PC-9 (cell line): ENCODE measurements at regions of chr7 and their contacts with region 1.

Region 1: GRCh38 chr7:17298207-17298839 is at the start of gene AHR:
- DNase-seq: peak; percentile 85 to 87
- H3K4me3 ChIP-seq: peak within 1 kb of the TSS; percentile 83
- H3K27ac ChIP-seq: peak within 1 kb of the TSS; percentile 68
- H3K4me1 ChIP-seq: peaks cover 36% of the 10 kb centered on the region
- H3K27me3 ChIP-seq: no peaks in the 10 kb centered on the region
- CTCF ChIP-seq: no peak
- total RNA-seq, gene AHR: 46.4 and 61.3 TPM in 2 replicates

Region 2: GRCh38 chr7:15863951-15864625 is 1434.2 kb before region 1 on chr7:
- CTCF ChIA-PET with region 1: no interaction called
- POLR2A ChIA-PET with region 1: no interaction called
- intact Hi-C with region 1: no loop called
- DNase-seq: no peak
- H3K4me3 ChIP-seq: no peak overlapping the region
- H3K27ac ChIP-seq: no peak overlapping the region
- H3K4me1 ChIP-seq: no peaks in the 10 kb centered on the region
- H3K27me3 ChIP-seq: no peaks in the 10 kb centered on the region
- CTCF ChIP-seq: no peak

Region 3: DNA sequence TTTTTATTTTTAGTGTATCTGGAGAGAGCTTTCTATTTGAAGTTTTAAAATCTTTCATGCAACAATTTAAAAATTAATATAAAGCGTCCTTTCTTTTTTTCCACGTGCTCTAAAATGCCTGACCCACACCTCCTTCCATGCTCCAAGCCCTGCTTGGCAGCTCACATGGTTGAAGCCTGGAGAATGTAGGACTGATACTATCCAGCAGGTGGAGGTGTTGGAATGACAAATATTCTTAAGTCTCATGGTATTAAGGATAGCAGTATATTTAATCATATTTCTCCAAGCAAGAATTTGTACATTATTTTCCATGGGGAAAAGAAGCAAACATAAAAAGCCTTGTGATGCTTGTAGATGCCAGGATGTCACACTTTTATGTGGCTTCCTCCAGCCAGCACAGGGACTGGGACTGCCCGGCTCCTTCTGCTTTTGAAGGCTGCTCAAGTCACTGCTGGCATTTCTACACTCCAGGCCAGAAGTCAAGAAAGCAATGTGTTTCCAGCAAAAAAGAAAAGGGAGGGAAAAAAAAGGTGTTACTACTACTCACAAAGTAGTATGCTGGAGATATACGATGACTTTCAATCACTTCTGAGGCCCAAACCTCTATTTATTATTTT is 602.6 kb before region 1 on chr7:
- CTCF ChIA-PET with region 1: interaction called, 3 read pairs
- POLR2A ChIA-PET with region 1: no interaction called
- intact Hi-C with region 1: loop called (anchors 10 kb)
- DNase-seq: peak; percentile 37 to 63
- H3K4me3 ChIP-seq: no peak overlapping the region
- H3K27ac ChIP-seq: no peak overlapping the region
- H3K4me1 ChIP-seq: no peaks in the 10 kb centered on the region
- H3K27me3 ChIP-seq: no peaks in the 10 kb centered on the region
- CTCF ChIP-seq: peak; percentile 89

Region 4: DNA sequence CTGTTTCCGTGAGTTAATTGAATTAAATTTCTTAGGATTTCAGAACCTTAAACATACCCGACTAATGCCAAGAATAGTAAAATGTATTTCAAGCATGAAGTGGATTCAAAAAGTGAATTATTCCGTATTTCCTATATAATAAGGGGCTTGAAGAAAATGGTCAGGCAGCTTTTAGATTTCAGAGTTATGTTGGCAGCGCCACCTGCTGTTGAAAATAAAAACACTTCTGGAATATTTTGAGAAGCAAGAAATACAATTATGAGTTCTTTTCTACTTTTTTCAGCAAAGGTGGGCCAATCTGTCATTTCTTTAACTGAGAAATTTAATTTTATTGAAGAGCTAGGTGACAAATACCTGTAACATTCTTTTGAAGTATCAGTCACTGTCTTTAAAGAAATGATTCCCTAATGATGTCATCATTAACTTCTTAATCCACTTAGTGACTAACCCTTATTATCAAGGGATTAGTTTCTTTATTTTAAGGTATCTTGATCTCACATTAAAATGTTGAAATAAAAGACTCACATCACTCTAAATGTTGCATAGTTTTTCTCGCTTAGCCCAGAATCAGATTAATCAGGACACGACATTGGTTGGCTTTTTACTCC is 379.9 kb before region 1 on chr7:
- CTCF ChIA-PET with region 1: no interaction called
- POLR2A ChIA-PET with region 1: no interaction called
- intact Hi-C with region 1: loop called (anchors 5 kb)
- DNase-seq: peak in 1 of 2 experiments; percentile 45
- H3K4me3 ChIP-seq: no peak overlapping the region
- H3K27ac ChIP-seq: no peak overlapping the region
- H3K4me1 ChIP-seq: peaks cover 86% of the 10 kb centered on the region
- H3K27me3 ChIP-seq: no peaks in the 10 kb centered on the region
- CTCF ChIP-seq: peak; percentile 96

Region 5: DNA sequence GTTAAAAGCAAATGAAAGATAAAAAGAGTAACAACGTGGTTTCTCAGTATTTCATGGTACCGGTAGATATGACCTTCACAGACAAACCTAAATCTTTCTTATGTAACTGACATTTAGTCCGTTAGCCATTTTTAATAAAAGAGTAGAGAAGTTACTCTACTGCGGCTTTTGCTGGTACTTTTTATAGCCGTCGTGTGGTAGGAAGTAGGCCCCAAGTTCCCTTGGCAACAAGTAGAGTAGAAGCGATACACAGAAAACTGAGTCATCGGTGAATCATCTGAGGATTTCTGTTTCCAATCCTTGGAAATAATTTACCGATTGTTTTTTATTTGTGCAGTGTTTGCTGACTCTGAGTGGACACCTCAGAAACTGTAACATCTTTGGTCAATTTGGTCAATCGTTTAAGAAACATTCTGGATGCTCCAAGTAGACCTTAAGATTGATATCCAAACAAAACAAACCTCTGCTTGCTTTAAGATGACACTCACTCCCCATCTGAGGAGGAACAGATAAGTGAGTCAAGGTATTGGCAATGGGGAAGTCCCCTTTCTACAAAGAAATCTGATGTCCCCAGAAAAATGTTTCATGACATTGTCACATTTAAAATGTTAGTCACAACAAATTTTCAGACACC is 63.8 kb before region 1 on chr7:
- CTCF ChIA-PET with region 1: no interaction called
- POLR2A ChIA-PET with region 1: no interaction called
- intact Hi-C with region 1: loop called (anchors 2 kb)
- DNase-seq: peak; percentile 56 to 97
- H3K4me3 ChIP-seq: peak overlapping the region; percentile 21; the same call in 1 of the 2 replicates
- H3K27ac ChIP-seq: peak overlapping the region; percentile 67
- H3K4me1 ChIP-seq: peaks cover 32% of the 10 kb centered on the region
- H3K27me3 ChIP-seq: no peaks in the 10 kb centered on the region
- CTCF ChIP-seq: no peak

Region 6: GRCh38 chr7:17477182-17477581 is 178.9 kb after region 1 on chr7:
- CTCF ChIA-PET with region 1: no interaction called
- POLR2A ChIA-PET with region 1: interaction called, 25 read pairs
- intact Hi-C with region 1: no loop called
- DNase-seq: no peak
- H3K4me3 ChIP-seq: no peak overlapping the region
- H3K27ac ChIP-seq: no peak overlapping the region
- H3K4me1 ChIP-seq: no peaks in the 10 kb centered on the region
- H3K27me3 ChIP-seq: no peaks in the 10 kb centered on the region
- CTCF ChIP-seq: no peak

Region 7: GRCh38 chr7:17618652-17618974 is 320.3 kb after region 1 on chr7:
- CTCF ChIA-PET with region 1: no interaction called
- POLR2A ChIA-PET with region 1: interaction called, 31 read pairs
- intact Hi-C with region 1: no loop called
- DNase-seq: peak; percentile 29 to 94
- H3K4me3 ChIP-seq: peak overlapping the region; percentile 12; the same call in 1 of the 2 replicates
- H3K27ac ChIP-seq: peak overlapping the region; percentile 51
- H3K4me1 ChIP-seq: peaks cover 34% of the 10 kb centered on the region
- H3K27me3 ChIP-seq: no peaks in the 10 kb centered on the region
- CTCF ChIP-seq: no peak